ENCODE measurements at regions of chr6 and their contacts with region 1.

Region 1: DNA sequence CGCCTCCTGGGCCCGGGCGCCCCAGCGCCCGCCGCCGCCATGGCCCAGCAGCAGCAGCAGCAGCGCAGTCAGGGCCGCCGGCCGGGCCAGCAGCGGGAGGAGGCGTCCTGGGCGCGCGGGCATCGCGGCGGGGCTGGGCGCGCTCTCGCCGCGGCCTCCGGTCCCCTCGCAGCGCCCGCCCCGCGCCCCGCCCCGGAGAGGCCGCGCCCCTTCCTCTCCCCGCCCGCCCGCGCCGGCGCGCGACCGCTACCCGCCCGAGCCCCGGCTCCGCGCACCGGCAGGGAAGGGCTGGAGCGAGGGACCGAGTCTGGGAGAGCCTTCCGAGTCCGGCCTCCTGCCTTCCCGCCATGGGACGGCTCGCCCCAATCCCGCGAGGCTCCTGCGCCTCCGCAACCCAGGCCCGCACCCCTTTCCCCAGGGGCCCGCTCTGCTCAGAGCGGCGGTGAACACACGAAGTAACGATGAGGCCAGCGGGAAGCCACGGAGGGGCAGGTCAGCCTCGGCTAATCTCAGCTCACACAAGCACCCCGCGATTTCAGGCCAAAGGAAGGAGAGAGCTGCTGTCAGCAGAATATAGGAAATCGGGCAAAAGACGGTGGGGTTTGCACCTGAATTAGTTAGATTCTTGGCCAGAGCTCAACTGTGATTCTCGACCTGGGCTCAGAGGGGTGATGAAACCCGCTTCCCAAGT is at the start of gene TXNDC5:
- DNase-seq: peak; percentile 72 to 87 (median 79)
- H3K4me3 ChIP-seq: peak within 1 kb of the TSS; percentile 44
- H3K27ac ChIP-seq: peak within 1 kb of the TSS; percentile 26 to 62
- H3K4me1 ChIP-seq: peaks cover 4% of the 10 kb centered on the region
- H3K27me3 ChIP-seq: no peaks in the 10 kb centered on the region
- CTCF ChIP-seq: no peak
- EP300 ChIP-seq: no peak
- POLR2A ChIP-seq: no peak
- total RNA-seq, gene TXNDC5: 88.0 to 146 (median 107) TPM

Region 2: GRCh38 chr6:7986219-7986618 is 75.4 kb after region 1 on chr6:
- intact Hi-C with region 1: loop called in 1 of 4 experiments (anchors 5 kb)
- DNase-seq: no peak
- H3K4me3 ChIP-seq: no peak overlapping the region
- H3K27ac ChIP-seq: no peak overlapping the region
- H3K4me1 ChIP-seq: no peaks in the 10 kb centered on the region
- H3K27me3 ChIP-seq: no peaks in the 10 kb centered on the region
- CTCF ChIP-seq: no peak
- EP300 ChIP-seq: no peak
- POLR2A ChIP-seq: no peak